Dendritic cell treated with granulocyte-macrophage colony-stimulating factor and Interleukin-4, amounts not matched to agents 40 ng/mL and 50 ng/mL, for 4 days (primary cell): ENCODE measurements at regions of chr1 and their contacts with region 1.

Region 1: GRCh38 chr1:16625497-16626408 is 12.4 kb upstream of the NBPF1 start:
- H3K4me3 Mint-ChIP-seq: no peak overlapping the region
- H3K27ac Mint-ChIP-seq: no peak overlapping the region
- H3K4me1 Mint-ChIP-seq: peaks cover 7% of the 10 kb centered on the region
- H3K27me3 Mint-ChIP-seq: no peaks in the 10 kb centered on the region

Region 2: DNA sequence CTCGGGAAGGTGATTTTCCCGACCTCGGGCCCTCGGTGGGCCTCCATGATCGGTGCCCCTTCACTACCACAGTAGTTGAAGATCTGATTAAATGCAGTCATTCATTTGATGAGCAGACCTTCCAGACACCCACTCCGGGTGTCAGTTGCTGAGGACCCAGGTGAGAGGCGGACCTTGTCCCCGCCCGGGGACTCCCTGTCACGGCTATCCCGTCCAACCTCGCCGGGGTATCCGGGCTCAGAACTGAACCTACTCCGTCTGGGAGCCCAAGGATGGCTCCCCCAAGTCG is 18.4 kb after region 1 on chr1:
- intact Hi-C with region 1: loop called (anchors 2 kb)
- H3K4me3 Mint-ChIP-seq: no peak overlapping the region
- H3K27ac Mint-ChIP-seq: no peak overlapping the region
- H3K4me1 Mint-ChIP-seq: no peaks in the 10 kb centered on the region
- H3K27me3 Mint-ChIP-seq: peaks cover 19% of the 10 kb centered on the region